ENCODE measurements at regions of chr9 and their contacts with region 1.

Region 1: DNA sequence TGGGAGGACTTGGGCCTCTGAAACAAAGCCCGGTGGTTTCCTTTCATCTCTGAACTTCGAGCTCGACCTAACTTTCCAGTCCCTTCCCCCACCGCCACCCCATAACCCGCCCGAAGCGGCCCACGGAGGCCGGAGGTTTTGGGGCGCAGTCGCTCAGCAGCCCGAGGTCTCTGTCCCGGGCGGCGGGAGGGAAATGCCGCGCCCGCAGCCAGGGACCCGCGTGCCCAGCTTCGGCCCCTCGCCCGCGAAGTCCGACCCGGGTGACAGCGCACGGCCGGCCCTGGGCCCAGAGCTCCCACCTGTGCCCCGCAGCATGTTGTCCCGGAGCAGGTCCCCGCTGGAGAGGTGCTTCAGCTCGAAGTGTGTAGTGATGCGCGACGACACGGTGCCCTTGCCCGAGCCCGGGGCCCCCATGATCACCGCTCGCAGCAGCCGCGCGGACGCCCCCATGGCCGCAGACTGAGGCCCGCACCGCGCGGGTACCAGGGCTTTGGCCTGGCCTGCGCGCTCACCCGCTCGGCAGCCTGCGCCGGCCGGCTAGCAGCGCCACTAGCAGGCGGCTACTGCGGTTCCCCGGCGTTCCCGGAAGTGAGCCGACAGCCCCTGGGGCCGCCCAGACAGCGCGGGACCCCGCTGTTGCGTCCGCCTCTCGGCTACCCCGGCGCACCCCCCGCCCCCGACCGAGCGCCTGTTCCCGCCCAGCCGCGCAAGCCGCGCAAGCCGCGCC is at the start of gene AK3:
- DNase-seq: peak; percentile 88
- H3K4me3 ChIP-seq: peak within 1 kb of the TSS; percentile 72
- H3K27ac ChIP-seq: peak within 1 kb of the TSS; percentile 95
- H3K4me1 ChIP-seq: no peaks in the 10 kb centered on the region
- H3K27me3 ChIP-seq: no peaks in the 10 kb centered on the region
- CTCF ChIP-seq: no peak
- total RNA-seq, gene AK3: 80.3 to 95.7 TPM

Region 2: DNA sequence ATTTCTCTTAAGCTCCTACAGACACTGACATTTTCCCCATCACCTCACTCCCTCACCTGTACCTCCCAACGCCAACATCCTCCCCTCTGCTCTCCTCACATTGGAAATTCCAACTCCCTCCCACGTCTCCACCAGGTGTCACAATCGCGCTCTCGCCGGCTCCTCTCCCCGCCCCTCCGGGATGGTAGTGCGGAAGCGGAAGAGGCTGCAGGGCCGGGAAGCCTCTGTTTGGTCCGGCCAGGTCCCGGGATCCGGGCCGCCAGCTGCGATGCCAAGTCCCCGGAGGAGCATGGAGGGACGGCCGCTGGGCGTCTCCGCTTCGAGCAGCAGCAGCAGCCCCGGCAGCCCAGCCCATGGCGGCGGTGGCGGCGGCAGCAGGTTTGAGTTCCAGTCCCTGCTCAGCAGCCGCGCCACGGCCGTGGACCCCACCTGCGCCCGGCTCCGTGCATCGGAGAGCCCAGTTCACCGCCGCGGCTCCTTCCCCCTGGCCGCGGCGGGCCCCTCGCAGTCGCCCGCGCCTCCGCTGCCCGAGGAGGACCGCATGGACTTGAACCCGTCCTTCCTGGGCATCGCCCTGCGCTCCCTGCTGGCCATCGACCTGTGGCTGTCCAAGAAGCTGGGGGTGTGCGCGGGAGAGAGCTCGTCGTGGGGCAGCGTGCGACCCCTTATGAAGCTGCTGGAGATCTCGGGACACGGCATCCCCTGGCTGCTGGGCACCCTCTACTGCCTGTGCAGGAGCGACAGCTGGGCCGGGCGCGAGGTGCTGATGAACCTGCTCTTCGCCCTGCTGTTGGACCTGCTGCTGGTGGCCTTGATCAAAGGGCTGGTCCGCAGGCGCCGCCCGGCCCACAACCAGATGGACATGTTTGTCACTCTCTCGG is 78.5 kb before region 1 on chr9 and contains the start of gene PLPP6:
- intact Hi-C with region 1: loop called (anchors 5 kb)
- DNase-seq: peak; percentile 94
- H3K4me3 ChIP-seq: peak within 1 kb of the TSS; percentile 77
- H3K27ac ChIP-seq: peak within 1 kb of the TSS; percentile 86
- H3K4me1 ChIP-seq: no peaks in the 10 kb centered on the region
- H3K27me3 ChIP-seq: no peaks in the 10 kb centered on the region
- CTCF ChIP-seq: peak; percentile 38
- total RNA-seq, gene PLPP6: 15.6 to 17.8 TPM

Region 3: DNA sequence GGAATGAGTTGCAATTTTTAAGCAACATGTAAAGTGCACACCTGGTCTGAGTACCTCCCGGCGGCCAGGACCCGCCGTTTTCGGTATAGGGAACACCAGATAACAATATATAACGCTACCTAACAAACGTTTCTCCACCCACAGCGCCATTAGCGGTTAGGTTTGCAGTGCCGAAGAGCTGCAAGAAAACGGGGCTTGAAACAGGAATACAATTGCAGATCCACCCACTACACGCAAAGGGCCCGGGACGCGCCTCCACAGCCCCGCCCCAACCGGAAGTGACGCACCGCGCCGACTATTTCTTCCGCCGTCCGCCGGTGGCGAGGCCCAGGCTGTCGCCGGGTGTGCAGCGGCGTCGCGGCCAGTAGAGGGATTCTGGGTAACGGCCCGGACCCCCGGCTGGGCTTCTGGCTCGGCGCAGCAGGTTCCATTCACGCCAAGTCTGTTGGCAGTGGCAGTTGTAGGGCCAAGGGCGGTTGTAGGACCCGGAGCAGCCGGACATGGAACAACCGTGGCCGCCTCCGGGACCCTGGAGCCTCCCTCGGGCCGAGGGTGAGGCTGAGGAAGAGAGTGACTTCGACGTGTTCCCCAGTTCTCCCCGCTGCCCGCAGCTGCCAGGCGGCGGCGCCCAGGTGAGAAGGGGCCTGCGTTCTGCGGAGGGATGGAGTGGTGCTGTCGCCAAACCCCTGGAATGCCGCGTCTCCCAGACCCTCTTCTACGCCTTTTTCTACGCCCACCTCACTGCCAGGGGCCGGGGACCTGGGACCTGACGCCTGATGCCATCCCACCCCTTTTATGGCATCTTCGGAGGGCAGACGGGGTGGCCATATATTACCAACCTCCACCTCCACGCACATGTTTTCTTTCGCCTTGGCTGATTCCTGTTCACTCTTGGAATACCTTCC is 61.3 kb before region 1 on chr9 and contains the start of gene CDC37L1:
- intact Hi-C with region 1: loop called (anchors 2 kb)
- DNase-seq: peak; percentile 99
- H3K4me3 ChIP-seq: peak within 1 kb of the TSS; percentile 67
- H3K27ac ChIP-seq: peak within 1 kb of the TSS; percentile 93
- H3K4me1 ChIP-seq: peaks cover 3% of the 10 kb centered on the region
- H3K27me3 ChIP-seq: no peaks in the 10 kb centered on the region
- CTCF ChIP-seq: peak; percentile 57
- total RNA-seq, gene CDC37L1: 11.4 to 16.1 TPM

Region 4: DNA sequence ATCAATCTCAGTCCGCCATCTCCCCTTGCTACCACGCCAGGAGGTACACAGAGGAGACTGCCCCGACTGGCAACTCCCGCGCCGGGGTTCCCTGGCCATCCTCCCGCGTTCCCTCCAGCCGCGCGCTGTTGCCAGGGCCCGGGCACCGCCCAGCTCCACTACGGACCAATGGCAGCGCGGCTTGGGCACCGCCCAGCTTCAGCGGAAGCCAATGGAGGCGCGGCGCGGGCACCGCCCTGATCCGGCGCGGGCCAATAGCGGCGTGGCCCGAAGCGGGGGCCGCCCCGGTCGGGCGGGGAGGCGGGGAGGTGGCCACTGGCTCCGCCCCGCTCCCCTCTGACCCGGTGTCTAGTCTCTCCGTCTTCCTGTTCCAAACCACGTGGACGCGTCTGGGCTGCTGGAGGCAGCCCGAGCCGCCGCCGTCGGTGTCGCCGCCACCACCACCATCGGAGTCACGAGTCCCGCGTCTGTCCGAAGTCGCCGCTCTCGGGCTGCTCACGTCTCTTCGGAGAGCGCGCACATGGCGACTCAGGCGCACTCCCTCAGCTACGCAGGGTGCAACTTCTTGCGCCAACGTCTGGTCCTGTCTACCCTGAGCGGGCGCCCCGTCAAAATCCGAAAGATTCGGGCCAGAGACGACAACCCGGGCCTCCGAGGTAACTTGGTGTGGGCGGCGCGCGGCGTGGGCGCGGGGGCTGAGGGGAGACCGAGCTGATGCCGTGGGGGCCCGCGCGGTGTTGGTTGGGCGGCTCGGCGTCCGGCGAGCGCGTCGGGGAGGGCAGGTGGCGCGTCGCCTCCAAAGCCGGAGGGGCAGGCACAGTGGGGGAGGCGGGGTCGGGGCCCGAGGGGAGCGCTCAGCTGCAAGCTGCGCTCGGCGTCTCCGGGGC is 52.0 kb after region 1 on chr9 and contains the start of gene RCL1:
- intact Hi-C with region 1: loop called (anchors 10 kb)
- DNase-seq: peak; percentile 96
- H3K4me3 ChIP-seq: peak within 1 kb of the TSS; percentile 90
- H3K27ac ChIP-seq: peak within 1 kb of the TSS; percentile 74
- H3K4me1 ChIP-seq: no peaks in the 10 kb centered on the region
- H3K27me3 ChIP-seq: no peaks in the 10 kb centered on the region
- CTCF ChIP-seq: no peak
- total RNA-seq, gene RCL1: 7.0 to 12.5 TPM

Measured in colonic mucosa (tissue), 4 donors.